ENCODE measurements at regions of chr12 and their contacts with region 1.

Region 1: DNA sequence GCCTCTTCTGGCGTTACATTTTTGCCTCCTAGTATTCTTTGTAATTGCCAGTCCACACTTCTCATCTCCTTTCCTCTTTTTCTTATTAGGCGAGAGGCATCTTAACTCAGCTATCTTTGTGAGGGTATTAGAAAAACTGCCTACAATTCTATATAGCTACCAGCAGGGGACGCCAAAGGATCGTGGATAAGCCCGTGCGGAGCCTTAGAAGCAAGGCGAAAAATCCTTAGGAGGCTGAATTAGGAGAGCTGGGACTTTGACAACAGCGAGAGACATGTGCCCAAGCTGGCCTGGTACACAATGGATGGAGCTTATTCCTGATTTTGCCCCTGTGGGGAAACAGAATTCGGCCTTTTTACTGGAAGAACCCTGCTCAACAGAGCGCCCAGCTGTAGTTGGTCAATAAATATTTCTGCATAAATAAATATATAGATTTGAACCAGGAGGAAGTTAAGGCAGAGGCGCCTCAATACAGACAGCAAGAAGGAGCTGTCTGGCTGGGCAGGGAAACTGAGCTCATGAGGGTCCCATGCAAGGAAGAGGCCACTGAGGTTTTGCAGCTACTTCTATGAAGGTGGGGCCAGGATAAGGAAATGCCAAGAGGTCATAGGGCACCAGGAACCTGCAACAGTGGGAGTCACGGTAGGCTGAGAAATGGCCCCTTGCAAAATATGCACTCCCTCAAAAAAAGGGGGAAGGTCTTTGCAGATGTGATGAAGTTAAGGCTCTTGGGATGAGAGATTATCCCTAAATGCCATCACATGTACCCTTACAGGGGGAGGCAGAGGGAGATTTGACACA is 14.6 kb upstream of the RBM19 start:
- DNase-seq: no peak
- H3K4me3 ChIP-seq: no peak overlapping the region
- H3K27me3 ChIP-seq: peaks cover 9% of the 10 kb centered on the region; the same call in 1 of the 2 replicates
- CTCF ChIP-seq: peak; percentile 96

Region 2: DNA sequence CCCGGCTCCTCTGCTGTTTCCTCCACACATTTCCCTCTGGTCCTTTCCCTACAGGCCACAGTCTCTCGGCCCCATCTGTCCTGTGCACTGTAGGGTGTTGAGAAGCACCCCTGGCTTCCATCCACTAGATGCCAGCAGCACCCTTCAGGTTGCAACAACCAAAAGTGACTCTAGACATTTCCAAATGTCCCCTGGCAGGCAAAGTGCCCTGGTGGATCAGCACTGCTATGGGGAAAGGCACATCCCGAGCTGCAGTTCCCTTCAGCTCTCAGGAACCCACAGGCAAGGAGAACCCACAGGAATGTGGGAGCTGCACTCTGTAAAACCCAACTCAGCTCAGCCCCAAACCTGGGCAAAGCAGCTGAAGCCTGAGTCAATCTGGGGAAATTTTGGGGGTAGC is 91.7 kb before region 1 on chr12:
- CTCF ChIA-PET with region 1: no interaction called
- POLR2A ChIA-PET with region 1: no interaction called
- DNase-seq: no peak
- H3K4me3 ChIP-seq: no peak overlapping the region
- H3K27me3 ChIP-seq: no peaks in the 10 kb centered on the region
- CTCF ChIP-seq: peak; percentile 21; the same call in 1 of the 2 replicates

Region 3: DNA sequence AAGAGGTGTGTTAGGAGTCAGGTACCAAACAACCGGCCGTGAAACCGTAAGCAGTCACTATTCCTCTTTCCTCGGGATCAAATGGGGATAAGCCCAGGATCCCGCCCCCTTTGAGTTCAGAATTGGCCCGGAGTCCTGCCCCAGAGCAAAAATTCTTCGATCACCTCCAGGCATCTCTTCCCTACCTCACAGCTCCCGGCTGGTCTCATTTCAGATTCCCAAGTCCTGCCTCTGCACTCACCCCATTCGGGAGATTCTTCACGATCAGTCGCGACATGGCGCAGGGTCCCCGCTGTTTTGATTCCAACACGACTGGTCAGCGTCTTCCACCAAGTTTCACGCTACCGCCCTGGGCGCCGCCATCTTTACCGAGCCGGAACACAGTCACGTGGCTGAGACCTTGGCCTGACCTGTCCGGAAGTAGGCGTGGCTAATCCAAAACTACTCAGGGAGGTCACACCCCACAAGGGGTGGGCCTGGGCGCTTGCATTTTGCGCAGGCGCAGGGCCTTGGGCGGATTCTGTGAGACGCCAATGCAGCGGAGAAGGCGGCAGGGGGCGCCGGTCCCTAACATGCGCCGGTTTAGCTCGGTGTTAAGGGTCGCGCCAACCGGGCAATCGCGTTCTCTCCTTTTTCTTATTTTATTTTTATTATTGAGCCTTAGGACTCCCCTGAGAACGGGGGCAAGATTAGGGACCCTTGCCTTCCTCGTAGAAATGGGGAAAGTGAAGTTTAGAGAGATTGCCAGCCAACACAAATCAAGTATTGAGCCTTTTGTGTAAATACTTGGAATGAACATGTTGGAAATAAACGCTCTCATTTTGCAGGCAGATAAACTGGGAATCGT is 14.6 kb before region 1 on chr12 and contains the start of gene RBM19:
- CTCF ChIA-PET with region 1: interaction called, 11 read pairs
- POLR2A ChIA-PET with region 1: no interaction called
- DNase-seq: peak; percentile 78
- H3K4me3 ChIP-seq: peak within 1 kb of the TSS; percentile 66
- H3K27me3 ChIP-seq: peaks cover 5% of the 10 kb centered on the region
- CTCF ChIP-seq: peak; percentile 99
- polyA plus RNA-seq, gene RBM19: 12.7 and 15.5 TPM in 2 replicates

Region 4: DNA sequence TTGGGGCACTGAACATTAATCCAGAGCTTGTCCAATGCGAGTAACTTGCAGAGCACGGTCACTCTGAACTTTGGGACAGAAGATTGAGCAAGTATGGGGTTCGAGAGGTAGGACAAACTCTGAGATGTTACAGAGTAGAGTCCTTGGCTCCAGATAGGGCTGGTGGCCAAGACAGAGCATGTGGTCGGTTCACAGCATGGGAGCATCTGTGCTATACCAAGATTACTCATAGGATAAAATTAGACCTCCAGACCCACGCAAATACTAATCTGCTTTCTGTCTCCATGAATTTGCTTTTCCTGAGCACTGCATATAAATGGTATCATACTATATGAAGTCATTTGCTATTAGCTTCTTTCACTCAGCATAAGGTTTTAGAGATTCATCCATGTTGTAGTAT is 518.6 kb after region 1 on chr12:
- CTCF ChIA-PET with region 1: interaction called, 3 read pairs
- POLR2A ChIA-PET with region 1: interaction called, 14 read pairs
- DNase-seq: peak; percentile 31
- H3K4me3 ChIP-seq: no peak overlapping the region
- H3K27me3 ChIP-seq: peaks cover 2% of the 10 kb centered on the region
- CTCF ChIP-seq: no peak

Region 5: GRCh38 chr12:114508529-114509129 is 527.9 kb after region 1 on chr12:
- CTCF ChIA-PET with region 1: interaction called, 63 read pairs
- POLR2A ChIA-PET with region 1: no interaction called
- DNase-seq: peak; percentile 24
- H3K4me3 ChIP-seq: no peak overlapping the region
- H3K27me3 ChIP-seq: no peaks in the 10 kb centered on the region
- CTCF ChIP-seq: peak; percentile 76

Region 6: GRCh38 chr12:114636723-114637483 is 656.2 kb after region 1 on chr12:
- CTCF ChIA-PET with region 1: interaction called, 10 read pairs
- POLR2A ChIA-PET with region 1: no interaction called
- DNase-seq: no peak
- H3K4me3 ChIP-seq: no peak overlapping the region
- H3K27me3 ChIP-seq: no peaks in the 10 kb centered on the region
- CTCF ChIP-seq: peak; percentile 65

Region 7: GRCh38 chr12:114697741-114698565 is 717.2 kb after region 1 on chr12:
- CTCF ChIA-PET with region 1: no interaction called
- POLR2A ChIA-PET with region 1: no interaction called
- DNase-seq: no peak
- H3K4me3 ChIP-seq: peak overlapping the region; percentile 46
- H3K27me3 ChIP-seq: no peaks in the 10 kb centered on the region
- CTCF ChIP-seq: no peak